Caco-2 (cell line): ENCODE measurements at regions of chr20 and their contacts with region 1.

Region 1: DNA sequence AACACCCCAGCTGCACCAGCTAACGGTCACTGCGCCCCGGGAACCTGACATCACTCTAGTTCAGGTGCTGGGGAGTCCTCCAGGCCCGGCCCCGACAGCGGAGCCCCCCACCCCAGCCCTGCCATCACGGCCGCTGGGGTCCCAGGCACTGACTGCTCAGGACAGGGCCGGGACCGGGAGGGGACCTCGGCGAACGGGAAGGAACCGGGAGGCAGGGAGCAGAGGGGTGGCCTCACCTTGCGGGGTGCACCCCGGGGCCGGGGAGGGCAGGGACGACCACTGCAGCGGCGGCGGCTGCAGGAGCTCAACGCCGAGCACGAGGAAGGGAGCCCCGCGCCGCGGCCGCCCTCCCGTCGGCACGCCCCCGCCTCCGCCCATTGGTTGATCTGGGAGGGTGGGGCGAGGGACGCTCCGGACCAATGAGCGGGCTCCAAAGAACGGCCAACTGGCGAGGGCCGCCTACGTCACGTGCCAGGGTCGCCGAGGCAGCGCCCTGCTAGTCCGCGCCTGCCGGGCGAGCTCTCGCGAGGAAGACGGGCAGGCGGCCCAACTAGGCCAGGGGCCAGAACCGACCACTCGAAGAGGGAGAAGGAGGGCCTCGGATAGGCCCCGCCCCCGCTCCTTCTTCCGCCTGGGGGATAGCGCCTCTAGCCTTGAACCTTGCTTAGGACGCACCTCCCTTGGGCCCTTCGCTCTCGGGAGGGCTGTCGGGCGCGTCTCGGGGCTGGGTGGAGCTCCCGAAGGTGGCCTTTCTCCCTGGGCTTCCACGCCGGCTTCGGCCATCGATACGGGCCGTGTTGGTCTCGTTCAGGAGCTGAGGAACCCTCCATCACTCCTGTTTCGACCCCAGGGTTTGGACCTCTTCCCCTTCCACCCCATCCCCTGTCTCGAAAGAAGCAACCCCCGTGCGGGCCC is at the start of gene ADISSP:
- DNase-seq: peak; percentile 99
- H3K4me3 ChIP-seq: peak within 1 kb of the TSS; percentile 91
- H3K4me3 Mint-ChIP-seq: peak within 1 kb of the TSS; percentile 90
- H3K27ac Mint-ChIP-seq: peak within 1 kb of the TSS; percentile 90
- H3K4me1 ChIP-seq: peaks cover 11% of the 10 kb centered on the region
- H3K4me1 Mint-ChIP-seq: peaks cover 7% of the 10 kb centered on the region
- H3K27me3 ChIP-seq: no peaks in the 10 kb centered on the region
- H3K27me3 Mint-ChIP-seq: no peaks in the 10 kb centered on the region
- CTCF ChIP-seq: peak in 1 of 2 experiments; percentile 29
- total RNA-seq, gene ADISSP: 54.7 and 56.1 TPM in 2 replicates

Region 2: DNA sequence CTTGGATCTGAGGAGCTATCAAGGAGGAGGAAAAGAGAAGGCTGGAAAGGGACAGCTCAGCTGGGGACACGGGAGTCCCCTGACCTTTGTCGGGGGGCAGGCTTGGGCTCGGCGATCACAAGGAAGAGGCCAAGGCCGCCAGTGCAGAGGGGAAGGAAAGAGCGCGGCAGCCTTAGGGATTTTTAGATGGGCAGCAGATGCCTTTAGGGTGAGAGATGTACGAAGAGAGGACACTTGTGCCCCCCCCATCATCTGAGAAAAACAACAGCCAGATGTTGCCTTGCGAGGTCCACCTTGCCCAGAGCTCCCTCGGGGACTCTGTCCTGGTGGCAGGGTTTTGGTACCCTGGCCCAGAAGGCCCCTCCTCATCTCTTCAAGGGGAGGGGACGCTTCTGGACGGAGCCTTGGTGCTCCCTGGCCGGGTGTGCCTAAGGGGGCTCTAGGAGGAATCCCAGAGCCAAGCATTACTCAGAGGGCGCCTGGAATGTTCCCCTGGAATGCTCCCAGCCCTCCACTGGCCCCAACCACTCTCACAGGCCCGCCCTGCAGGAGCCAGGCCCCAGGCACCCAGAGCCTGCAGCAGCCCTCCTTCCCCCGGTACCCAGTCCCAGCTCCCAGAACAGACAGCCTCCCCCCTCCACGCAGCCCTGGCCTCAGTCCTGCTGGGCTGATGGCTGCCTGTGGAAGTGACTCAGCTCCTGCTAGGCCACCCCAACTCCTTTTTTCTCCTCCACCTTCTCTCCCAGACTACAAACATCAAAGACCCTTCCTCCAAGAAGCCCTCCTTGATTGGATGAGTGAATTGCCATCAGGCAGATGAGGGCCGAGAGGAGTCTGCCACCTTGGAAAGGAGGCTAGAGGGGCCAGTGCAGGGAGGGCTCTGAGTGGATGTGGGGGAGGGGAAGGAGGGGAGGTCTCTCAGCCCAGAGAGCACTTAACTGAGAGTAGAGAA is 87.7 kb before region 1 on chr20:
- CTCF ChIA-PET with region 1: interaction called, 34 read pairs
- POLR2A ChIA-PET with region 1: interaction called, 5 read pairs
- intact Hi-C with region 1: loop called (anchors 1 kb)
- DNase-seq: no peak
- H3K4me3 ChIP-seq: no peak overlapping the region
- H3K4me3 Mint-ChIP-seq: no peak overlapping the region
- H3K27ac Mint-ChIP-seq: no peak overlapping the region
- H3K4me1 ChIP-seq: no peaks in the 10 kb centered on the region
- H3K4me1 Mint-ChIP-seq: no peaks in the 10 kb centered on the region
- H3K27me3 ChIP-seq: no peaks in the 10 kb centered on the region
- H3K27me3 Mint-ChIP-seq: peaks cover 11% of the 10 kb centered on the region
- CTCF ChIP-seq: no peak

Region 3: GRCh38 chr20:3716195-3716834 is 51.4 kb before region 1 on chr20:
- CTCF ChIA-PET with region 1: interaction called, 35 read pairs
- POLR2A ChIA-PET with region 1: no interaction called
- intact Hi-C with region 1: loop called (anchors 1 kb)
- DNase-seq: peak; percentile 77
- H3K4me3 ChIP-seq: no peak overlapping the region
- H3K4me3 Mint-ChIP-seq: no peak overlapping the region
- H3K27ac Mint-ChIP-seq: peak overlapping the region; percentile 6
- H3K4me1 ChIP-seq: no peaks in the 10 kb centered on the region
- H3K4me1 Mint-ChIP-seq: no peaks in the 10 kb centered on the region
- H3K27me3 ChIP-seq: no peaks in the 10 kb centered on the region; the same call in 1 of the 2 replicates
- H3K27me3 Mint-ChIP-seq: no peaks in the 10 kb centered on the region
- CTCF ChIP-seq: peak; percentile 80 to 94

Region 4: GRCh38 chr20:3781153-3781910 is 13.6 kb after region 1 on chr20 and contains the start of gene SPEF1:
- CTCF ChIA-PET with region 1: interaction called, 49 read pairs
- POLR2A ChIA-PET with region 1: interaction called, 10 read pairs
- intact Hi-C with region 1: loop called (anchors 1 kb)
- DNase-seq: peak; percentile 93 to 95
- H3K4me3 ChIP-seq: peak within 1 kb of the TSS; percentile 42
- H3K4me3 Mint-ChIP-seq: peak within 1 kb of the TSS; percentile 69
- H3K27ac Mint-ChIP-seq: peak within 1 kb of the TSS; percentile 69
- H3K4me1 ChIP-seq: peaks cover 25% of the 10 kb centered on the region
- H3K4me1 Mint-ChIP-seq: no peaks in the 10 kb centered on the region
- H3K27me3 ChIP-seq: no peaks in the 10 kb centered on the region
- H3K27me3 Mint-ChIP-seq: peaks cover 3% of the 10 kb centered on the region
- CTCF ChIP-seq: peak; percentile 55 to 60
- total RNA-seq, gene SPEF1: not detected in 2 replicates

Region 5: GRCh38 chr20:3820048-3820900 is 52.6 kb after region 1 on chr20 and contains the start of gene AP5S1:
- CTCF ChIA-PET with region 1: interaction called, 15 read pairs
- POLR2A ChIA-PET with region 1: interaction called, 4 read pairs
- intact Hi-C with region 1: no loop called
- DNase-seq: peak; percentile 97 to 98
- H3K4me3 ChIP-seq: peak within 1 kb of the TSS; percentile 100
- H3K4me3 Mint-ChIP-seq: peak within 1 kb of the TSS; percentile 92
- H3K27ac Mint-ChIP-seq: peak within 1 kb of the TSS; percentile 97
- H3K4me1 ChIP-seq: peaks cover 15% of the 10 kb centered on the region
- H3K4me1 Mint-ChIP-seq: peaks cover 7% of the 10 kb centered on the region
- H3K27me3 ChIP-seq: no peaks in the 10 kb centered on the region
- H3K27me3 Mint-ChIP-seq: no peaks in the 10 kb centered on the region
- CTCF ChIP-seq: peak; percentile 83 to 93
- total RNA-seq, gene AP5S1: 14.9 and 17.3 TPM in 2 replicates